ENCODE measurements at regions of chr13 and their contacts with region 1.

Region 1: DNA sequence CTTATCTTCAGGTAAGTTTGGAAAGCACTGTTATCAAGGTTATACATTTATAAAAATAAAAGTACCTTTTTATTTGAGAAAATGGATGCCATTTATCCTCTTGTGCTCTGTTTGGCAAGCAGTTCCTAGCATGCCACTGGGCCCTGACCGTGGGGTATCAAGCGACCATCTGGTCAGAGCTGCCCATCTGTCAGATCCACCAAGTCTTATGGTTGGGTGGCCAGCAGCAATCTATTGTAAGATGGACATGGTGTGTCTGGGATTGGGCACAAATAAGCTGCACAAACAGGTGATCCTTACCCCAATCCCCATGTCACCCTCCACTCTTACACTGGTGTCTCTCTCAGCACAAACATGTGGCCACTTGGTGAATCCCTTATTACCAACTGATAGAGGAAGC is 178.5 kb downstream of the DLEU7 start:
- DNase-seq: no peak
- H3K4me3 ChIP-seq: no peak overlapping the region
- H3K27ac ChIP-seq: no peak overlapping the region
- H3K4me1 ChIP-seq: no peaks in the 10 kb centered on the region
- H3K27me3 ChIP-seq: no peaks in the 10 kb centered on the region
- CTCF ChIP-seq: no peak

Region 2: GRCh38 chr13:48818495-48819031 is 1846.4 kb before region 1 on chr13:
- CTCF ChIA-PET with region 1: no interaction called
- POLR2A ChIA-PET with region 1: interaction called, 16 read pairs
- intact Hi-C with region 1: no loop called
- DNase-seq: no peak
- H3K4me3 ChIP-seq: no peak overlapping the region
- H3K27ac ChIP-seq: no peak overlapping the region
- H3K4me1 ChIP-seq: no peaks in the 10 kb centered on the region
- H3K27me3 ChIP-seq: no peaks in the 10 kb centered on the region
- CTCF ChIP-seq: no peak

Region 3: DNA sequence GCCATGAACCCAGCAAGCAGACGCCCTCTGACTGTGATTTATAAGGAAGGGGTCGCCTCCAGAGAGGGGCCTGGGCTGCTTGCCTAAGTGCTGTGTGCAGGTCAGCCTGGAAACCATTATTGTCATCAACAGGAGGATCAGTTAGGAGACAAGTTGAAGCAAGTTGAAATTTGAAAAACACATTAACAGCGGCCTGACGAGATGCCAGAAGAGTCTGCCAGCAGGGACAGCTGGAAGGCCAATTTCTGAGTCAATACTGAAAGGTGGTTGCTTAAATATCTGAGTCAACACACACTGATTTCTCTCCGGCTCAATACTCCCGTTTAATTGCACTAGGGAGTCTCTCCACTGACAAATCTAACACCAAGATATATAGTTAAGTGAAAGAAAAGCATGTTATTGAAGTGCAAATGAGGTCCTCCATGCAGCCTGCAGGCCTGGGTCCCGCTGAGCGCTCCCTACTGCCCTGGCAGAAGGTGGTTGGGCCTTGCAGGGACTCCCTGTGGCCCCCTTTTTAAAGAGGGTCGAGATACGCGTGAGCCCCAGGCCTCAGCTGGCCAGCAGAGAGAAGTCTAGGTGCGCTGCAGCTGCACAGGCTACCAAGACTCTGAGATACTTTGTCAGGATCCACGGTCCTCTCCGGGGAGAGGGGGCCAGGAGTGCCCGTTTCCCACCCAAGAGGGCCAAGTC is 335.8 kb after region 1 on chr13:
- CTCF ChIA-PET with region 1: interaction called, 10 read pairs
- POLR2A ChIA-PET with region 1: no interaction called
- intact Hi-C with region 1: no loop called
- DNase-seq: no peak
- H3K4me3 ChIP-seq: no peak overlapping the region
- H3K27ac ChIP-seq: no peak overlapping the region
- H3K4me1 ChIP-seq: no peaks in the 10 kb centered on the region
- H3K27me3 ChIP-seq: peaks cover 30% of the 10 kb centered on the region
- CTCF ChIP-seq: no peak

Measured in PC-9 (cell line).